ENCODE measurements at regions of chr1 and their contacts with region 1.

Region 1: GRCh38 chr1:145845514-145846161 is at the start of gene NUDT17:
- DNase-seq: no peak
- H3K4me3 ChIP-seq: peak within 1 kb of the TSS; percentile 70
- CTCF ChIP-seq: peak; percentile 94

Region 2: DNA sequence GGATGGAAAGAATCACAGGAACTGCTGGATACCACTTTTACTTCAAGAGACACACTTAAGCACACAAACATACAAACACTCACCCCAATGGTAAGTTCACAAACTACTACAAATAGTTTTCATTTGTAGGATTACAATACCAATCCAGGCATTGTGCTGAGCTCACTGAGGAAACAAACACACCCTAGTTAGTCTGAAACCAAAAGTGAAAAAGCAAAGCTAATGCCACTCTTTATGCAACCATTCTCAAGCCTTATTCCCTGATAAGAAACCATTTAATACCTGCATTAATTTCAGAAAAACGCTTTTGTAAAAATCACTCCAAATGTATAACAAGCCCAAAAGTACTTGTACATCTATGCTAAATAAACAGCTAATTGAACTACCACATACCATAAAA is 60.1 kb before region 1 on chr1:
- CTCF ChIA-PET with region 1: no interaction called
- POLR2A ChIA-PET with region 1: no interaction called
- DNase-seq: no peak
- H3K4me3 ChIP-seq: no peak overlapping the region
- CTCF ChIP-seq: no peak

Region 3: GRCh38 chr1:145823565-145824498 is 21.8 kb before region 1 on chr1 and contains the starts of genes POLR3C and RNF115:
- CTCF ChIA-PET with region 1: interaction called, 136 read pairs
- POLR2A ChIA-PET with region 1: interaction called, 5 read pairs
- DNase-seq: peak; percentile 36
- H3K4me3 ChIP-seq: peak within 1 kb of the TSS; percentile 82
- CTCF ChIP-seq: no peak

Region 4: GRCh38 chr1:145871994-145872924 is 26.6 kb after region 1 on chr1:
- CTCF ChIA-PET with region 1: interaction called, 16 read pairs
- POLR2A ChIA-PET with region 1: interaction called, 3 read pairs
- DNase-seq: no peak
- H3K4me3 ChIP-seq: peak overlapping the region; percentile 29
- CTCF ChIP-seq: no peak

Region 5: DNA sequence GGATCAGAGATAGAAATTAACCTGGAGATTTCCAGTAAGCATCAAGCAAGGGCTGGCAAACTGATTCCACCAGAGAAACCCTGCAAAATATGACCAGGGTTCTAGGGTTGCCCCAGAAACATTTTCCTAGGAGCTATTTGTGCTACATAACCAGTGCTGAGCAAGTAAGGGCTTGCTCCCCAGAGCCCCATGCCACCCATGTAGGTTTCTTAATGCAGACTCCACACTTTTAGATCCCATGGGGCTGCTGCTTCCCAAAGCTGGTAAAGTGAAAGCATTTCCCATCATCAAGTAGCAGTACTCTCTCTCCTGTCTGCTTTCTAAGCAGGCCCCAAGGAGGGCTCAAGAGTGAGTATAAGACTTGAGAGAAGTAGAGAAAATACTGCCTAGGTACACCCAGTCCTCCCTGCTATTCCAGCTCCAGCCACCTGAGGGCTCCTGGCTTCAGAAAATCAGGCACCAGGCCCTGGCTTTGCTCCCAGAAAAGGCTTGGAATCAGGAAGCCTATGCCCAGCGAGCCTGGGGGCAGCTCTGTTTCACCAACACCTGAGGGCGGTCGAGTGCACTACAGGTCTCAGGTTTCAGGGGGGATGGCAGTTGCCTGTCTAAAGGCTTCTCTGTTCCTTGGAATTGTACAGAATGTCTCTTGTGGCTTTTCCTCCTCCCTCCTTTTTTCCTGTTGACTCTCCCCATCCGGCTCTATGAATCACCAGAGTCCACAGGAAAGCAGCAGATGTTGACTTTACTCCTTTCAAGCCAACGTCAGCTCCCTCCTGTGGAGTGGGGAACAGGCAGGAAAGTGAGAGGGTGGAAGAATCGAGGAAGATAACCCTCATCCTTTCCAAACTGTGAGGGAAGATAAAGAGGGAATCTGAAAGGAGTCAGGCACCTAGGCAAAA is 46.2 kb after region 1 on chr1:
- CTCF ChIA-PET with region 1: interaction called, 80 read pairs
- POLR2A ChIA-PET with region 1: interaction called, 4 read pairs
- DNase-seq: peak; percentile 95
- H3K4me3 ChIP-seq: no peak overlapping the region; the same call in 1 of the 2 replicates
- CTCF ChIP-seq: peak; percentile 79

Region 6: GRCh38 chr1:145912128-145912641 is 66.5 kb after region 1 on chr1:
- CTCF ChIA-PET with region 1: interaction called, 142 read pairs
- POLR2A ChIA-PET with region 1: interaction called, 4 read pairs
- DNase-seq: no peak
- H3K4me3 ChIP-seq: no peak overlapping the region
- CTCF ChIP-seq: no peak

Region 7: DNA sequence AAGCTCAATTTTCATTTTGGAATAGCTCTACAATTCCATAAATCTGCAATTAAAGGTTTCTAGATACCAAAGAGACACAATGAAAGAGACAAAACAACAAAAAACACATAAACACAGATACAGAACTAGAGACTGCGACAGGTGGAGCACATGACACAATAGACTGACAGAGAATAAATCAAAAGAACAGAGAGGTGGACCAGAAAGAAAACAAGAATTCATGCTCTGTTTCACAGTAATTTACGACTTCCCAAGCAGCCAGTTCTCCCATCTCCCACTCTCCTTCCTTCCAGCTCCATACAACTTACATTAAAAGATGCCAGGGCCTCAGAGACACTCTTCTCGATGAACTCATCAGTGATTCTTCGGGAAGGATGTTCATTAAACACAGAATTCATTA is 96.8 kb after region 1 on chr1:
- CTCF ChIA-PET with region 1: no interaction called
- POLR2A ChIA-PET with region 1: no interaction called
- DNase-seq: no peak
- H3K4me3 ChIP-seq: no peak overlapping the region
- CTCF ChIP-seq: no peak

Region 8: GRCh38 chr1:145978854-145979759 is 133.5 kb after region 1 on chr1:
- CTCF ChIA-PET with region 1: interaction called, 17 read pairs
- POLR2A ChIA-PET with region 1: no interaction called
- DNase-seq: peak; percentile 100
- H3K4me3 ChIP-seq: peak overlapping the region; percentile 31
- CTCF ChIP-seq: peak; percentile 42

Measured in AG04449 (cell line).